ENCODE measurements at regions of chr3 and their contacts with region 1.

Region 1: GRCh38 chr3:110821586-110821985 is 250.0 kb upstream of the NECTIN3 start:
- DNase-seq: no peak
- H3K4me3 ChIP-seq: no peak overlapping the region
- H3K27ac ChIP-seq: no peak overlapping the region
- H3K4me1 ChIP-seq: no peaks in the 10 kb centered on the region
- H3K27me3 ChIP-seq: no peaks in the 10 kb centered on the region
- CTCF ChIP-seq: no peak
- EP300 ChIP-seq: no peak
- POLR2A ChIP-seq: no peak

Region 2: GRCh38 chr3:110743202-110743601 is 78.4 kb before region 1 on chr3:
- in situ Hi-C with region 1: no loop called
- intact Hi-C with region 1: no loop called
- DNase-seq: no peak
- H3K4me3 ChIP-seq: no peak overlapping the region
- H3K27ac ChIP-seq: peak overlapping the region in 2 of 4 donors; percentile 35 to 54
- H3K4me1 ChIP-seq: peaks cover 0 to 22% (median 11%) of the 10 kb centered on the region in 4 donors
- H3K27me3 ChIP-seq: no peaks in the 10 kb centered on the region
- CTCF ChIP-seq: no peak
- EP300 ChIP-seq: no peak
- POLR2A ChIP-seq: no peak

Region 3: DNA sequence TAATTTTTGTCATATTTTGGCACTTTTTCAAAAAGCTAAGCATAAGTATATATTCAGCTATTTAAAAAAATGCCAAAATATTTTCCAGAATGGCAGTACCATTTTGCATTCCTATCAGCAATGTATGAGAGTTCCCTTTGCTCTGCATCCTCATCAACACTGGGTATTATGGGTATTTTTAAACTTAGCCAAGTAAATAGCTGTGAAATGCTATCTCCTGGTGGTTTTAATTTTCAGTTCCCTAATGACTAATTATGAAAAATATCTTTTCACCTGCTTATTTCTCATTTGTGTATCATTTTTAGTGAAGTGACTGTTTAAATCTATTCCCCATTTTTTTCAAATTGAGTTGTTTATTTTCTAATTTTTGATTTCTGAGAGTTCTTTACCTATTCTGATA is 50.3 kb after region 1 on chr3:
- in situ Hi-C with region 1: no loop called
- intact Hi-C with region 1: loop called (anchors 2 kb)
- DNase-seq: no peak
- H3K4me3 ChIP-seq: no peak overlapping the region
- H3K27ac ChIP-seq: no peak overlapping the region
- H3K4me1 ChIP-seq: no peaks in the 10 kb centered on the region
- H3K27me3 ChIP-seq: no peaks in the 10 kb centered on the region
- CTCF ChIP-seq: no peak
- EP300 ChIP-seq: no peak
- POLR2A ChIP-seq: no peak

Measured in transverse colon (tissue), 4 donors.